ENCODE measurements at regions of chr3 and their contacts with region 1.

Region 1: DNA sequence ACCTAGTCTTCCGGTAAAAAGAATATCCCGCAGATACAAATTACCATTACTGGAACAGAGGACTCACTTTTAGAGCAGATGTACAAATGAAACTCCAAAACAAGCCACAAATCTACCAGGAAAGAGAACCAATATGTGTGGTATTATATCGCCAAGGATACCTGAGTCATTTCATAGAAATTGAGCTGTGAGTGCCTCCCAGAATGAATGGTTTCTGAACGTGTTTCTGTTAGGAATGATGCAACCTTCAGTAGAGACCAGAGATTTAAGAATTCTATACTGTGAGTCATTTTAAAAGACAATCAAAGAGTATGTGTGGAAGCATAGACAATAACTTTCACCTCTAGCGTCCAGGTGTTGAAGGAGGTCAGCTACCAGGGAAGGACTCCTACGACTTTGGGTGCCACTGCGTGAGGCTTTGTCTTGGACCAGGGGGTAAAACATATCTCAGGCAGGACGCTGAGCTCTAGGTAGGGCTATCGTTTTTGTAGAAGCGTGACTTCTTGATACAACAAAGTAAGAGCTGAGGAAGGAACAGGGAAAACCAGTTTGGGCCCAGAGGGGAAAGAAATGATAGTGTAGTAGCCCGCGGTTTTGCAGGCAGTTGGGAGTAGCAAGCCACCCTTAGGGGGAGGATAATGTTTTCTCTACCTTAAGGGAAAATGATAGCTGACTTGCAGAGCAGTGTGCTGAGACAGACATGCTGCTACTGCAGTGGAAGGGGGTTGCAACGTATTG is 210.5 kb downstream of the TP63 start:
- DNase-seq: peak; percentile 83 to 97
- H3K4me3 ChIP-seq: peak overlapping the region; percentile 40; the same call in 1 of the 2 replicates
- H3K27ac ChIP-seq: peak overlapping the region; percentile 97
- H3K4me1 ChIP-seq: peaks cover 26% of the 10 kb centered on the region
- H3K27me3 ChIP-seq: no peaks in the 10 kb centered on the region
- CTCF ChIP-seq: no peak

Region 2: DNA sequence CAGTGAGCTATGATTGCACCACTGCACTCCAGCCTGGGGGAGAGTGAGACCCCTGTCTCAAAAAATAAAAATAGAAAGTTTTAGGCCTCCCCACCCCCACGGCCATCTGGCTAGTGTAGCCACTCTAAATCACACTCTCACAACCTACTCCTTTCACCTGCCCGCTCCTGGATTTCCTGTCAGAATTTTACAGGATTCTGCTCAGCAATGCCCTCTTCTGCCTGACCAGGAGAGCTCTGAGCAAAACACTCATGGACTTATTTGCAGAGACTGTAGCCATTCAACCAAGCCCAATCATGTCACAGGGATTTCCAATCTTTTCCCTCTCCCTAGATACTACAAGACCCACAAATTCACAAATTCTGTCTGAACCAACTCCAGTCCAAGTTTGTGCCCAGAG is 912.5 kb before region 1 on chr3:
- CTCF ChIA-PET with region 1: no interaction called
- POLR2A ChIA-PET with region 1: no interaction called
- intact Hi-C with region 1: no loop called
- DNase-seq: peak in 1 of 2 experiments; percentile 43
- H3K4me3 ChIP-seq: no peak overlapping the region
- H3K27ac ChIP-seq: no peak overlapping the region
- H3K4me1 ChIP-seq: no peaks in the 10 kb centered on the region
- H3K27me3 ChIP-seq: no peaks in the 10 kb centered on the region
- CTCF ChIP-seq: no peak; the same call in 1 of the 2 replicates

Region 3: GRCh38 chr3:189167027-189167766 is 674.4 kb before region 1 on chr3:
- CTCF ChIA-PET with region 1: no interaction called
- POLR2A ChIA-PET with region 1: no interaction called
- intact Hi-C with region 1: loop called (anchors 10 kb)
- DNase-seq: peak; percentile 89 to 94
- H3K4me3 ChIP-seq: no peak overlapping the region
- H3K27ac ChIP-seq: 0 out of 2 replicates have a peak overlapping the region, but pooled peaks have one; percentile 17
- H3K4me1 ChIP-seq: peaks cover 14% of the 10 kb centered on the region
- H3K27me3 ChIP-seq: no peaks in the 10 kb centered on the region
- CTCF ChIP-seq: no peak

Region 4: DNA sequence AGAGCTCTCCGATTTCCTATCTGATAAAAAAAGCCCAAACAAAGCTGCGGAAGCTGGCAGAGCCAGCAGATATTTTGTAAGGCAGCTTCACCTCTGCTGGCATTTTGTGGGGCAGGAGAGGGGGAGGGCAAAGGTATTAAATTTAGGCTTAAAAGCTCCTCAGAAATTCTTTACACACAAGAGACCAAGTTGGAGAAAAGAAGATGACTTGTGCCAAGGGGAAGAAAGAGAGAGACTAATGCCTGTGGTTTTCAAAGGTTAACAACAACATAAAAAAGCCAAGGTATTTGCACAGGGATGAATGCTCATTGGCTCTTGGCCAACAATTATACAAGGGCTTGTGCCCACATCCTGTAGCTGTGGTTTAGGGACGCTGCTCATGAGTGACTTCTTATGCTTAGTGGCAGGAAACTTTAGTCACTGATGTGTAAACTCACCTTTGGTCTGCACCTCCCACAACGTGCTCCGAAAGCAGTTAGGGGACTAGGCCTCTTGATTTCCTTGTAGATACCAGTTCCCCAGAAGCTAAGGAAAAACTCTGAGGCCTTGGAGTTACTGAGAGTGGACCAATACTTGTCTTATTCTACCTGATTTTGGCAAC is 517.0 kb before region 1 on chr3:
- CTCF ChIA-PET with region 1: interaction called, 7 read pairs
- POLR2A ChIA-PET with region 1: interaction called, 4 read pairs
- intact Hi-C with region 1: loop called (anchors 1 kb)
- DNase-seq: peak; percentile 92 to 100
- H3K4me3 ChIP-seq: no peak overlapping the region
- H3K27ac ChIP-seq: peak overlapping the region; percentile 89
- H3K4me1 ChIP-seq: peaks cover 40% of the 10 kb centered on the region
- H3K27me3 ChIP-seq: no peaks in the 10 kb centered on the region
- CTCF ChIP-seq: no peak

Region 5: GRCh38 chr3:189458532-189458931 is 383.1 kb before region 1 on chr3:
- CTCF ChIA-PET with region 1: no interaction called
- POLR2A ChIA-PET with region 1: no interaction called
- intact Hi-C with region 1: loop called (anchors 5 kb)
- DNase-seq: peak; percentile 84 to 86
- H3K4me3 ChIP-seq: no peak overlapping the region
- H3K27ac ChIP-seq: no peak overlapping the region
- H3K4me1 ChIP-seq: peaks cover 11% of the 10 kb centered on the region
- H3K27me3 ChIP-seq: no peaks in the 10 kb centered on the region
- CTCF ChIP-seq: no peak

Region 6: GRCh38 chr3:189573004-189573403 is 268.6 kb before region 1 on chr3:
- CTCF ChIA-PET with region 1: no interaction called
- POLR2A ChIA-PET with region 1: no interaction called
- intact Hi-C with region 1: loop called (anchors 1 kb)
- DNase-seq: peak; percentile 26 to 39
- H3K4me3 ChIP-seq: no peak overlapping the region
- H3K27ac ChIP-seq: peak overlapping the region; percentile 91
- H3K4me1 ChIP-seq: peaks cover 30% of the 10 kb centered on the region
- H3K27me3 ChIP-seq: no peaks in the 10 kb centered on the region
- CTCF ChIP-seq: no peak

Region 7: DNA sequence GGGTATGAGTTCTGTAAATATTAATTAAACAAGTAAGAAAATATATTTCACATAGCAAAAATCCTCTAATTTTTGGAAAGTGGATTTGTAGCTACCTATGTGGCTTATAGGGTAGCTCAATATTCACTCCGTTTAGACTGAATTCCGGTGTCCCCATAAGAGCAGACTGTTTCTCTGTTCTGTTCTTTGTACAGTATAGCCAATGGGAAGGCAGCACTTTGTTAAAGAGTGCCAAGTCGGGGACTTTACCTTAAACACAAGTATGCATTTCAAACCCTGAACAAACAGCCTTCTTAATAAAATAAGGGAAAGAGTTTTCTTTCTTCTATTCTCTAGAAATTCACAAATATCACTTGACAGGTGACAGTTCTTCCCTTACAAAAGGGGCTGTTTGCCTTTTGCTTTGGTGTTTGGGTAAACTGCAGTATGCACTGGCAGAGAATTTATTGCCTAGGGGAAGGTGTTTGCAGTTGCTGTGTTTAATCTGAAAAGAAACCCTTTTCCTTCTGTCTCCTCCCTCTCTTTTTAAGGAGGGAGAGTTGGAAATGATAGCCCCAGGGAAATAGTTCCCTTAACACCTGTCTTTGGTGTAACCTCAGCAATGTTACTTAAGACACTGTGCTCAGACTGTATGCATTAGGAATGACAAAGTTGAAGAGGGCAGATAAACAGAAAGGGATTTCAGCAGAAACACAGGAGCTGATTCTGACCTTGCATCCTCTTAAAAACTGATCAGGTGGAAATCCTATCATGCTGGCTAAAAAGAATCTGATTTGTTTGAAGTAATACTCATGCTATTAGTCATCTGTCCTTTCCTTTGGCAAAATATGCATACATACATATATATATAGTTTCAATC is 85.2 kb before region 1 on chr3:
- CTCF ChIA-PET with region 1: no interaction called
- POLR2A ChIA-PET with region 1: interaction called, 5 read pairs
- intact Hi-C with region 1: loop called (anchors 1 kb)
- DNase-seq: peak; percentile 58 to 100
- H3K4me3 ChIP-seq: no peak overlapping the region; the same call in 1 of the 2 replicates
- H3K27ac ChIP-seq: peak overlapping the region; percentile 93
- H3K4me1 ChIP-seq: peaks cover 40% of the 10 kb centered on the region
- H3K27me3 ChIP-seq: no peaks in the 10 kb centered on the region
- CTCF ChIP-seq: no peak

Region 8: GRCh38 chr3:189908646-189909045 is 67.0 kb after region 1 on chr3:
- CTCF ChIA-PET with region 1: no interaction called
- POLR2A ChIA-PET with region 1: no interaction called
- intact Hi-C with region 1: loop called (anchors 1 kb)
- DNase-seq: peak; percentile 47 to 77
- H3K4me3 ChIP-seq: peak overlapping the region; percentile 7; the same call in 1 of the 2 replicates
- H3K27ac ChIP-seq: peak overlapping the region; percentile 98
- H3K4me1 ChIP-seq: peaks cover 45% of the 10 kb centered on the region
- H3K27me3 ChIP-seq: no peaks in the 10 kb centered on the region
- CTCF ChIP-seq: no peak